Activated CD4-positive, alpha-beta T cell treated with anti-CD3 and anti-CD28 coated beads for 36 hours (primary cell): ENCODE measurements at regions of chr17 and their contacts with region 1.

Region 1: GRCh38 chr17:59331129-59331928 is at the start of gene YPEL2:
- DNase-seq: peak; percentile 93
- ATAC-seq: peak; percentile 95
- H3K4me3 Mint-ChIP-seq: peak within 1 kb of the TSS; percentile 81
- H3K27ac Mint-ChIP-seq: peak within 1 kb of the TSS; percentile 75
- H3K4me1 Mint-ChIP-seq: peaks cover 68% of the 10 kb centered on the region
- H3K27me3 Mint-ChIP-seq: no peaks in the 10 kb centered on the region
- total RNA-seq, gene YPEL2: 4.3 to 6.9 TPM

Region 2: GRCh38 chr17:58344047-58344790 is 987.1 kb before region 1 on chr17:
- CTCF ChIA-PET with region 1: no interaction called
- POLR2A ChIA-PET with region 1: no interaction called
- intact Hi-C with region 1: loop called in 1 of 2 experiments (anchors 10 kb)
- DNase-seq: peak; percentile 95
- ATAC-seq: peak; percentile 76
- H3K4me3 Mint-ChIP-seq: peak overlapping the region; percentile 100
- H3K27ac Mint-ChIP-seq: peak overlapping the region; percentile 99
- H3K4me1 Mint-ChIP-seq: peaks cover 74% of the 10 kb centered on the region
- H3K27me3 Mint-ChIP-seq: no peaks in the 10 kb centered on the region

Region 3: GRCh38 chr17:59155439-59156182 is 175.7 kb before region 1 on chr17 and contains the start of gene PRR11:
- CTCF ChIA-PET with region 1: no interaction called
- POLR2A ChIA-PET with region 1: no interaction called
- intact Hi-C with region 1: loop called in 1 of 2 experiments (anchors 1 kb)
- DNase-seq: peak; percentile 96
- ATAC-seq: peak; percentile 89
- H3K4me3 Mint-ChIP-seq: no peak within 1 kb of the TSS
- H3K27ac Mint-ChIP-seq: no peak within 1 kb of the TSS
- H3K4me1 Mint-ChIP-seq: peaks cover 37% of the 10 kb centered on the region
- H3K27me3 Mint-ChIP-seq: no peaks in the 10 kb centered on the region
- total RNA-seq, gene PRR11: 73.6 to 95.9 TPM

Region 4: GRCh38 chr17:59202320-59202719 is 129.0 kb before region 1 on chr17:
- CTCF ChIA-PET with region 1: no interaction called
- POLR2A ChIA-PET with region 1: no interaction called
- intact Hi-C with region 1: no loop called
- DNase-seq: no peak
- ATAC-seq: no peak
- H3K4me3 Mint-ChIP-seq: no peak overlapping the region
- H3K27ac Mint-ChIP-seq: no peak overlapping the region
- H3K4me1 Mint-ChIP-seq: no peaks in the 10 kb centered on the region
- H3K27me3 Mint-ChIP-seq: no peaks in the 10 kb centered on the region

Region 5: GRCh38 chr17:59311130-59311920 is 20.0 kb before region 1 on chr17:
- CTCF ChIA-PET with region 1: interaction called, 43 read pairs
- POLR2A ChIA-PET with region 1: no interaction called
- intact Hi-C with region 1: no loop called
- DNase-seq: peak; percentile 48
- ATAC-seq: peak; percentile 99
- H3K4me3 Mint-ChIP-seq: no peak overlapping the region
- H3K27ac Mint-ChIP-seq: no peak overlapping the region
- H3K4me1 Mint-ChIP-seq: peaks cover 2% of the 10 kb centered on the region
- H3K27me3 Mint-ChIP-seq: no peaks in the 10 kb centered on the region

Region 6: DNA sequence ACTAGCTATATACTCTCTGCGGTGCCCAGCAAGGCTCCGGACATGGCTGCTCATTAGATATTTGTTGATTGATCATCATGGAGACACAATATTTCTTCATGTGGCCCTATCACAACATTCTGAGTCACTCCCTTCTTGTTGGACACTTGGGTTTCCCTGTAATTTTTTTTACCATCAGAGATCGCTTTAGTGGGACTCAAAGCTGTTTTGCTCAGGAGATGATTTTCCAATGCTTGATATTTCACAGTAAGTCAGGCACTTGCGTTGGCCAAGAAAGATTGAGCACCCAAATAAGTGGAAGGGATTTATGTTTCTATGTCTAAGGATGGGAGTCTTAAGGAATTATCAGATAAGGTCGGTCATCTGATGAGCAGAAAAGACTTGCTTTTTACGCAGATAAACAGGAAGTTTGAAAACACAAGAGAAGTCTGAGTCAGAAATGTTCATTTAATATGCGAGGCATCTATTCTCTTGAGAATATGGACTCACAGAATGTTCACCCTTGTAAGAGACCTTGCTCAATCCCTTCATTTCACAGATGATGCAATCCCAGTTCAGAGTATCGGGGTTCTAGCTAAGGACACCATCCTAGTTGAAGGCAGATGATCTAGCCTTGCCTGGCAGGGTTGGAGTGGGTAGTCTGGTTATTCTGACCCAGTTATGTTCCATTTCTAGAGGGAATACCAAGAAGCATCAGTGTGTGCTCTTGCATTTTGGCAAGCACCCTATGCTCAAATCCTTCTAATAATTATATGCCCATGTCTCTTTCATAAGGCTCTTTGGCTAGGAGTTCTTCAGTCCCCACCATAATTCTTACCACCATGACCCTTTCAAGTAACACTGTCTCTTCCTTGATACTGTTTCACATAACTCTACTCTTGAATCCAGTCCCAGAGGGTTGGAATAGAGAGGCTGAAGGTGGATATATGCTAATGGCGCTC is 42.5 kb after region 1 on chr17:
- CTCF ChIA-PET with region 1: interaction called, 15 read pairs
- POLR2A ChIA-PET with region 1: interaction called, 3 read pairs
- intact Hi-C with region 1: no loop called
- DNase-seq: no peak
- ATAC-seq: peak; percentile 42
- H3K4me3 Mint-ChIP-seq: no peak overlapping the region
- H3K27ac Mint-ChIP-seq: peak overlapping the region; percentile 85
- H3K4me1 Mint-ChIP-seq: peaks cover 63% of the 10 kb centered on the region
- H3K27me3 Mint-ChIP-seq: no peaks in the 10 kb centered on the region

Region 7: DNA sequence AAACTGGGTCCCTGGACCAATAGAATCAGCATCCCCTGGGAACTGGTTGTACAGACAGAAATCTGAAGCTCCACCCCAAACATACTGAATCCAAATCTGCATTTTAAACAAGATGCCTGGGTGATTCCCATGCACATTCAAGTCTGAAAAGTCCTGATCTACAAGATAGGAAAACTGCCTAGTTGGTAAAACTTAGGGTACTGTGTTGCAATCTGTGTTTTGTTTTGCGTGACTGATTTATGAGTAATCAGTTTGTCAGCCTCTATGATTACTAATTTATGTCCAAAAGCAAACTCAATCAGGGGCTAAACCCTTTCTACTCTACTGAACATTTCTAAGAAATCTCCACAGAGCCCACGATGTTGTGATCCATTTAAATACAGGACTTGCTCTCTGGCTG is 103.9 kb after region 1 on chr17:
- CTCF ChIA-PET with region 1: interaction called, 59 read pairs
- POLR2A ChIA-PET with region 1: interaction called, 4 read pairs
- intact Hi-C with region 1: loop called (anchors 1 kb)
- DNase-seq: no peak
- ATAC-seq: peak; percentile 89
- H3K4me3 Mint-ChIP-seq: peak overlapping the region; percentile 47
- H3K27ac Mint-ChIP-seq: peak overlapping the region; percentile 87
- H3K4me1 Mint-ChIP-seq: peaks cover 63% of the 10 kb centered on the region
- H3K27me3 Mint-ChIP-seq: peaks cover 7% of the 10 kb centered on the region

Region 8: DNA sequence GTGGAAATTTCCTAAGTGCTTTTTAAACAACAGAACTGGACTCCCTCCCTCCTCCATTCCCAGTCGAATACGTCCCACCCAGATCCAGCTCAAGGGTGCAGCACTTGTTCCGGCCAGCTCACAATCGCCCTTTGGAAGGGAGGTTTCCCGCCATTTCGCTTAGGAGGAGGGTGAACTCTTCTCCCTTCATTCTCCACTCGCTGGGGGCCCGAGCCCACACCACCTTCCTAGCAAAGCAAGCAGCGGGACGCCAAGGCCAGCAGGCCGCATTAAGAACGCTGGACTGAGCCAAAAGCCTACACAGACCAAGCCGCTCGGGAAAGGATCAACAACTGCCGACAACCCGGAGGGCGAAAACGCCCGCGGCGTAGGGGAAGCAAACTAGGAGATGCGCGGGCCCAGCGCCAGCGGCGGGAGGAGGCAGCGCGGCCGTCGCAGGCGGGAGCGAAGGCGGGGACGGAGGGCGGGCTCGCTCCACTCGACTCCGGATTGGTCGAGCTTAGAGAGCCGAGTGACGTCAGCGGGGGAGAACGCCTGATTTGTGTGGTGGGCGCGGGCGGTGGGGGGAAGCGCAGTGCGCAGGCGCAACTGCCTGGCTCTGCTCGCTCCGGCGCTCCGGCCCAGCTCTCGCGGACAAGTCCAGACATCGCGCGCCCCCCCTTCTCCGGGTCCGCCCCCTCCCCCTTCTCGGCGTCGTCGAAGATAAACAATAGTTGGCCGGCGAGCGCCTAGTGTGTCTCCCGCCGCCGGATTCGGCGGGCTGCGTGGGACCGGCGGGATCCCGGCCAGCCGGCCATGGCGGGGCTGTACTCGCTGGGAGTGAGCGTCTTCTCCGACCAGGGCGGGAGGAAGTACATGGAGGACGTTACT is 1268.5 kb after region 1 on chr17 and contains the start of gene PPM1D:
- CTCF ChIA-PET with region 1: no interaction called
- POLR2A ChIA-PET with region 1: no interaction called
- intact Hi-C with region 1: loop called in 1 of 2 experiments (anchors 10 kb)
- DNase-seq: peak; percentile 99
- ATAC-seq: peak; percentile 94
- H3K4me3 Mint-ChIP-seq: peak within 1 kb of the TSS; percentile 95
- H3K27ac Mint-ChIP-seq: peak within 1 kb of the TSS; percentile 97
- H3K4me1 Mint-ChIP-seq: peaks cover 31% of the 10 kb centered on the region
- H3K27me3 Mint-ChIP-seq: no peaks in the 10 kb centered on the region
- total RNA-seq, gene PPM1D: 9.3 to 9.7 TPM